Right ventricle myocardium superior (tissue), 1 donor: ENCODE measurements at regions of chr3 and their contacts with region 1.

Region 1: GRCh38 chr3:194141415-194142155 is 5.6 kb downstream of the HES1 start:
- DNase-seq: peak; percentile 95
- ATAC-seq: peak; percentile 86

Region 2: DNA sequence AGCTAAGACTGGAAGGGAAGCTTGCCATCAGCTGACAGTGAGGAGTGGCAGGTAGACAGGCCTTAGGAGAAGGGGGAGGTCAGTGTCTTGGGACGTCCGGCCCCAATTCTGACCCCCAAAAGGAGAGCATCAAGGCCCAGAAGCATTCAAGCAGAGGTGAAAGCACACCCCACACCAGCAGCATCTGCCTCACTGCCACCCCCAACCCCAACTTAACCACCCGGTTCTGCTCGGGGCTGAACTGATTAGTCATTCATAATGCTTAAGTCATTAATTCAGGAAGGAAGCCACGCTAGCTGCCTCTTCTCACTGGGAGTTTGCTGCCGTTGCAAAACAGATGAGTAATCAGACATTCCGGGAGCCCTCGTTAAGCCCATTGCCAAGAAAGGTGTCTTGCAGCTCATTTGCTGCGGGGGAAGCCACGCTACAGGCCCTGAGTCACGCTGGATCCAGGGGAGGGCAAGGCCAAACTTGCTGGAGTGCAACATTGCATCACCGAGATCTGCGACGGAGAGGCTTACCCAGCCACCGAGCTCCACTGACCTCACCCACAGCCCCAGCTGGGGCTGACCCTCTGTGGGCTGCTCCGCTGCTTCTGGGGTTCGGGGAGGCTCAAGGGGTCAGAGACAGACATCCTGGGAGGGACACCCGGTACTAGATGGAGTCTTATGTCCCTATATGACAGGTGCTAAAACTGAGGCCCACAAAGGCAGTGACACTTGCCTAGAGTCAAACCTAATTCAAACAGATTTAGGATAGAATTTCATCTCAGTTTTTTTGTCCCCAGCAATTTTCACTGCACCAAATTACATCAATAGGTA is 52.0 kb before region 1 on chr3:
- intact Hi-C with region 1: no loop called
- DNase-seq: peak; percentile 75
- ATAC-seq: peak; percentile 73

Region 3: DNA sequence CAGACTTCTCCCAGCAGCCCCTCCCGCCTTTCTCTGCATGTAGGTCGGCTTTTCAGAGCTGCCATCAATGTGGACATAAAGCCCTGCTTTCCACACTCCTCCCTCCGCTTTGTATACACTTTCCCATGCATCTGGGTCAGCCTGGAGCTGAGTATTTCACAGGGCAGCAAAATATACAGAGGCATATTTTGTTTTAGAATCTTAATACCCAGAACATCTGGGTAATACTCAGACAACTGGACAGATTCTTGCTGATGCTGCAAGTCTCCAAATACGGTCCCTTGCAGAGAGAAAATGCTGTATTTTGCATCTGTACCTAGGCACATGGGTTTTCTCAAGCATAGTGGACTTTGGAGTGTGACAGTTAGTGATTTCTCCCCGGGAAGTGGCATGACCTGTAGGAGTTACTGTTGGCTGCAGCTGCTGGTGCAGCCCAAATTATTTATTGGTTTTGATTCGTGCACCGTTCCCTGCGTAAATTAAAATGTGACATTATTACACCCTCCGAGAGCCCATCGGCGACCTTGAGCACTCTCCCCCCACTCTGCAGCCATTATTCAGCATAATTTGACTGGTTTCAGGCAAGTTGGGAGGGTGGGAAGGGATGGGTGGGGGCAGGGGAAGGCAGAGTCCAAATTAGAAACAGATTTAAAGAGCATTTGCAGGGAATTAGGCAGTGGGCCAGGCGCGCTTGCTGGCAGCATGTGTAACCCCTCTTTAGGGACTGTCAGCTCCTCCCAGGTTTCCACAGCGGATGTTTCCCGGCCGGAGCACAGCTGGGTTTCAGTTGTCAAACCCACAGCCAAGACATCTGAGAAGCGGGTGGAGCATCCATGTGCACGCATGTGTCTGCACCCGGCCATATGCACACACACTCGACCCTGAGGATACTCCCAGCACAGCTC is 108.8 kb after region 1 on chr3:
- intact Hi-C with region 1: loop called (anchors 5 kb)
- DNase-seq: peak; percentile 91
- ATAC-seq: peak; percentile 88